ENCODE measurements at regions of chr19 and their contacts with region 1.

Region 1: GRCh38 chr19:54029930-54030490 is 33.7 kb downstream of the VSTM1 start:
- DNase-seq: peak in 3 of 4 donors; percentile 13 to 45 (median 38)
- ATAC-seq: peak; percentile 82
- H3K4me3 ChIP-seq: no peak overlapping the region
- H3K27ac ChIP-seq: no peak overlapping the region
- H3K4me1 ChIP-seq: peaks cover 0 to 13% of the 10 kb centered on the region in 2 donors
- H3K27me3 ChIP-seq: peaks cover 0 to 59% of the 10 kb centered on the region in 2 donors
- CTCF ChIP-seq: peak; percentile 52 to 65

Region 2: DNA sequence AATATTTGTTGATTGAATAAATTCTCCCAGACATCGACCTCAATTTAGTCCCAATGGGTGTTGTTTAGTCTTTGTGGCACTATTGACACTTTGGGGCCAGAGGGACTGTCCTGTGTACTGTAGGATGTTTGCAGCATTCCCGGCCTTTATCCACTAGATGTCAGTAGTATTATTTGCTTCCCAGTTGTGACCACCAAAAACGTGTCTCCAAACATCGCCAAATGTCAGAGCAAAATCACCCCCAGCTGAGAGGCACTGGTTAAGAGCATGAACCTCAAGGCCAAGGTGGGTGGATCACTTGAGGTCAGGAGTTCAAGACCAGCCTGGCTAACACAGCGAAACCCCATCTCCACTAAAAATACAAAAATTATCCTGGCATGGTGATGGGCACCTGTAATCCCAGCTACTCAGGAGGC is 221.3 kb before region 1 on chr19:
- intact Hi-C with region 1: loop called in 1 of 2 experiments (anchors 10 kb)
- DNase-seq: no peak
- ATAC-seq: peak; percentile 63
- H3K4me3 ChIP-seq: no peak overlapping the region
- H3K27ac ChIP-seq: no peak overlapping the region
- H3K4me1 ChIP-seq: no peaks in the 10 kb centered on the region
- H3K27me3 ChIP-seq: no peaks in the 10 kb centered on the region
- CTCF ChIP-seq: peak; percentile 31 to 46

Region 3: GRCh38 chr19:53906211-53907192 is 123.5 kb before region 1 on chr19:
- intact Hi-C with region 1: loop called in 1 of 2 experiments (anchors 10 kb)
- DNase-seq: peak in 2 of 4 donors; percentile 52 to 92
- ATAC-seq: peak; percentile 75
- H3K4me3 ChIP-seq: no peak overlapping the region
- H3K27ac ChIP-seq: no peak overlapping the region
- H3K4me1 ChIP-seq: peaks cover 0 to 21% of the 10 kb centered on the region in 2 donors
- H3K27me3 ChIP-seq: peaks cover 48 to 96% of the 10 kb centered on the region in 2 donors
- CTCF ChIP-seq: peak; percentile 78 to 91

Measured in left lung (tissue), 14 donors.